Activated naive CD4-positive, alpha-beta T cell treated with anti-CD3 and anti-CD28 coated beads for 36 hours (primary cell): ENCODE measurements at regions of chr10 and their contacts with region 1.

Region 1: DNA sequence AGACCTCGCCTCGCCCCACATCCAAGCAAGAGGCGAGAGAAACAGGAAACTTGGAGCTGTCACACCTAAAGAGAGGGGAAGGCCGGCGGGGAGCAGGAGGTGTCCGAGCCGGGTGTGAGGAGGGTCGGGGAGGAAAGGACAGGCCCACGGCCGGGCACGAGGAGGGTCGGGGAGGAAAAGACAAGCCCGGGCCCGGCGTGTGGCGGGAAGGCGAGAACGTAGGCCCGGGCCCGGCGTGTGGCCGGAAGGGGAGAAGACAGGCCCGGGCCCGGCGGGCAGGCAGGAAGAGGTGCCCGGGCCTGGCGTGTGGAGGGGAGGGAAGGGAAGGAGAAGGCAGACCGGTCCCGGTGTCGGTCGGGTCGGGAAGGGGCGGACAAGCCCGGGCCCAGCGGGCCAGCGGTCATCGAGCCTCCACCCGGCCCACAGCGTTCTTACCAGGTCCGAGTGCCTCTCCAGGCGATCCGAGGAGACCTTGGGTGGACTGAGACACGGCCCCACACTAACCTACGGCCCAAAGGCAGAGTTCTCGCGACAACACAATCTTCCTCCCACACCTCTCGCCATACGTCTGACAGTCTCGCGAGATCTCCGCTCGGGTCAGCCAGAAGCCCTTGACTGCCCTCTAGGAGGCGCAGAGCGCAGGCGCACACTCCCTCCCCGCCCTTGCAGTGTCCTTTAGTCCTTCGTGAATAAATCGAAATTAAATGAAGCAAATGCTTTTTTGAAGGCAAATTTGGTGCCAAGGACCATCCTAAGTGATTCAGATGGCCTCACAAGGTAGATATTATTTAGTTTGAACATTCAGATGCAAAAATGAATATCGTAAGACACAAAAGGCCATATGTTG is at the start of gene NCOA4:
- DNase-seq: peak; percentile 98
- H3K4me3 Mint-ChIP-seq: peak within 1 kb of the TSS; percentile 97
- H3K27ac Mint-ChIP-seq: peak within 1 kb of the TSS; percentile 92
- H3K4me1 Mint-ChIP-seq: peaks cover 49% of the 10 kb centered on the region
- H3K27me3 Mint-ChIP-seq: no peaks in the 10 kb centered on the region
- total RNA-seq, gene NCOA4: 74.2 to 75.0 TPM

Region 2: DNA sequence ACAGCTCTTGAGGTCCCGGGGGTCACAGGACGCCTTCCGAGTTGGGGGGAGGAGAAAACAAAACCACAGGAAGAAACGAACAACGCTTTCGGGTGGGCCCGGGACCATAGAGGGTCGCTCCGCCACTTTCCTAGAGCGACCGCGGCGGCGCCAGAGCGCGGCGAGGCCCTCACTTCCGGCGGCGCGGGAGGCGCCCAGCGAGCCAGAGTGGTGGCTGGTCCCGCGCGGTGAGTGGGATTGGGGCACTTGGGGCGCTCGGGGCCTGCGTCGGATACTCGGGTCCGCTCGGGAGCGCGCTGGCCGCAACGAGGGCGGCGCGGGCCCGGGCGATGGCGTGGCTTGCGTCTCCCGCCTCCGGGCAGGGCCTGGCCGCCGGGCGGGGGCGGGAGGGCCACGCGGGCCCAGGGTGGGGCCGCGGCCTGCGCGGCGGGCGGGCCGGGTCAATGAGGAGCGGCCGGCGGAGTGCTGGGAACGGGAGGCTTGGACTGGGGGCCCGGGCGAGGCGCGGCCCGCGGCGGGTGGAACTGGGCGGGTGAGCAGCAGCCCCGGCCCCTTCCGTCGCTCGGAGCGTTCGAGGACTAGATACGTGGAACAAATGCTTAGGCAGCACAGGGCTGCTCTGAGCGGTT is 1029.4 kb before region 1 on chr10 and contains the start of gene ZNF22:
- CTCF ChIA-PET with region 1: no interaction called
- intact Hi-C with region 1: loop called (anchors 5 kb)
- DNase-seq: peak; percentile 65
- H3K4me3 Mint-ChIP-seq: peak within 1 kb of the TSS; percentile 83
- H3K27ac Mint-ChIP-seq: peak within 1 kb of the TSS; percentile 79
- H3K4me1 Mint-ChIP-seq: peaks cover 26% of the 10 kb centered on the region
- H3K27me3 Mint-ChIP-seq: no peaks in the 10 kb centered on the region
- total RNA-seq, gene ZNF22: 18.7 to 19.5 TPM

Region 3: DNA sequence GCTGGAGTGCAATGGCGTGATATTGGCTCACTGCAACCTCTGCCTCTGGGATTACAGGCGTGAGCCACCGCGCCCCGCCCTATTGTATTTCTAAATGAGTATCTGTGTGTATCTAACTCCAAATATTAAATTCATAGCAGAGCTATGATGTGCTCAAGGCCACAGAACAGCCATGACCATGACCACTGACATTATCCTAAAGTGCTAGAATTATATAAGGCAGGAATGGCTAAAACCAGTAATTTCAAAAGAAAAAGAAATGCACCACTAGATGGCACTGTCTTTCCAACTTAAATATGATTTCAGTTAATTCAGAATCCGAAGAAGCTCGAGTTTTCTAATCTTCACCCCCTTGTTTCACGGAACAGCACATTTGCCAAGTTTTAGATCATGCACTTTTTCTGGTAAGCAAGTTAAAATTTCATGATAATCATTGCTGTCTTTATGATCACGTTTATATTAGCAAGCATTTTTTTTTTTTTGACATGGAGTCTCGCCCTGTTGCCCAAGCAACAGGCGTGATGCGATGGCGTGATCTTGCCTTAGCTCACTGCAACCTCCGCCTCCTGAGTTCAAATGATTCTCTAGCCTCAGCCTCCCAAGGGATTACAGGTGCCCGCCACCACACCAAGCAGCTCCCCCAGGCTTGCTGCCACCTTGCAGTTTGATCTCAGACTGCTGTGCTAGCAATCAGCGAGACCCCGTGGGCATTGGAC is 780.2 kb before region 1 on chr10:
- CTCF ChIA-PET with region 1: no interaction called
- intact Hi-C with region 1: loop called (anchors 5 kb)
- DNase-seq: no peak
- H3K4me3 Mint-ChIP-seq: no peak overlapping the region
- H3K27ac Mint-ChIP-seq: no peak overlapping the region
- H3K4me1 Mint-ChIP-seq: peaks cover 2% of the 10 kb centered on the region
- H3K27me3 Mint-ChIP-seq: no peaks in the 10 kb centered on the region

Region 4: DNA sequence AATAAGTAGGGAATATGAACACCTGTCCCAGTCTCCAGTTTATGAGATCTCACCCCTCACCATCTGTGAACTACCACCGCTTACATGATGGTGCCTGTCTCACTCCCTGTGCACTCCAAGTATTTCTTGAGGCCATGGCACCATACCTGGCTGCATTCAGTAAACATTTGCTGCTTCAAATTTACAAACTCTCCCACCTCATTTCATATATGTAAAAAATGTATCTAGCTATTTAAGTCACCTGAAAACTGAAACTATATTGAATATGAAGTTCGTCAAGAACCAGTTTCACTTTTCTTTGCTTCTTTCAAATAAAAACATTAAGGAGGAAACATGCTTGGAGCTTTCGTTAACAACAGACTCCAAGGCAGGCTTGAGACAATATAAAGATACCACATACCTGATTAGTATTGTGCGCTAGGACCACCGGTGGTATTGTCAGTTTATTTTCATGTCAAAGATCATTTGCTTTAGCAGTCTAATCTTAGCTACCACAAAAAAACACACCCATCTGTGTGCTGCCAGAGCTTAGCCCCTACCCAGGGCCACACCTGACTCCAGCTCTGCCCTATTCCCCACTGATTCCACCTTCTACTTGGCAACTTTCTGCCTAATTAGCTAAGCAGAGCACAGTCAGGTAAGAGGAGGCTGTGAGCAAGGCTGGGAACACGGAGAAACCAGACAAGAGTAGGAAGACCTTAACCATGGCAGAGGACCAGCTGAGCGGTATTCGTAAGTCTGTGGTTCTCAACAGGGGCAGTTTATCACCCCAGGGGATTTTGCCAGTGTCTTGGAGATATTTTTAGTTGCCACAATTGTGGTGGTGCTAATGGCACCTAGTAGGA is 449.7 kb before region 1 on chr10:
- CTCF ChIA-PET with region 1: no interaction called
- intact Hi-C with region 1: loop called (anchors 5 kb)
- DNase-seq: peak; percentile 64
- H3K4me3 Mint-ChIP-seq: peak overlapping the region; percentile 83
- H3K27ac Mint-ChIP-seq: peak overlapping the region; percentile 97
- H3K4me1 Mint-ChIP-seq: peaks cover 42% of the 10 kb centered on the region
- H3K27me3 Mint-ChIP-seq: no peaks in the 10 kb centered on the region

Region 5: DNA sequence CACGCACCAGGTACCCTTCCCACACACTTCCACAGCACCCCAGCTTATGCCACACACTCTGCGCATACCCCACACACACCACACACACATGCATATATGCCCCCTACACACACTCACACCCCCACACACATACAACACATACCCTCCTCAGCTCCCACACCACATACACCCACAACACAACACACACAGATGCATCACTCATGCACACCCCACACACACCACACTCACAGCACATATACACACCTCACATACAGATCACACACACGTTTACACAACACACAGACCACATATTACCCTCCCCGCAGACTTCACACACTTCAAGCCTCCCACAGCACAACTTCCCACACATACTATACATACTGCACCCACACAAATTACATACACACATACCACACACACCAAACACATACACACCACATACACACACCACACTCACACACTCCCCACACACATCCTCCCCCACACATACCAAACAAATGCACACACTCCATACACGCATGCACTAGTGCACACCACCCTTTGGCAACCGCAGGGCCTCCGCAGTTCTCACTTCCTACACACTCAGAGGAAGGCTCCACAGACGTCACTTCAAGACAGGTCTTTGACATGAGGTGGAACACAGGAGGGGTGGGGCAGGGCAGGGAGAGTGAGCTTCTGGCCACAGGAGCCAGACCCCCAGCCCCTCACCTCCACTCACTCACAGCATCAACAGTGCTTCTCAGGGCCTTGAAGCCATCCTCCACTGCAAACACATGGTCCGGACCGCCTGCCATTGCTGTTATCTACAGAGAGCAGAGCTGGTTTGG is 238.0 kb after region 1 on chr10:
- CTCF ChIA-PET with region 1: no interaction called
- intact Hi-C with region 1: loop called (anchors 2 kb)
- DNase-seq: peak; percentile 89
- H3K4me3 Mint-ChIP-seq: no peak overlapping the region
- H3K27ac Mint-ChIP-seq: no peak overlapping the region
- H3K4me1 Mint-ChIP-seq: peaks cover 54% of the 10 kb centered on the region
- H3K27me3 Mint-ChIP-seq: no peaks in the 10 kb centered on the region

Region 6: DNA sequence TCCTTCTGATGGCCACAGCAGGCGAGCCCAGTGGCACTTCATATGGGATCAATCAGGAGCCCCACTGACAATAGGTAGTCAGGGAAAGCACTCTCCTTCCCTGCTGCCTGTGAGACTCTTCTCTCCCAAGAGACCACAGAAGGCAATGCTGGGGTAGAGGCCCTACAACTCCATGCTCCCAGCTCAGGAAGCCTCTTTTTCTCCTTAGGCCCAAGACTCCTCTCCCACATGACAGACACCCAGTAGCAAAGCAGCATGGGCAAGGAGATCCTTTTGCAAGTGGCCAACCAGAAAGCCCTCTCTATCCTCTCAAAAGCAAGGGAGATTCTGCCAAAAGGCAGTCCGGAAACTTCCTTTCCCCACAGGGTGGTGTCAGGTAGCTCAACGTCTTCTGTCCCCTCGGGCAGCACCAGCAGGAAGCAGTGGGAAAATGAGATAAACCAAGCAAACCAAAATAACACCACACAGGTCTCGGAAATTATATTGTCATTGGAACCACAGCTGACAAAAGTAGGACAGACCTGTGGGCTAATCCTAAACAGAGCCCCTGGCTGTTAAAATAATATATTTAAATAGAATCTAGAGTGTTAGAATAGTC is 1097.0 kb after region 1 on chr10:
- CTCF ChIA-PET with region 1: no interaction called
- intact Hi-C with region 1: no loop called
- DNase-seq: no peak
- H3K4me3 Mint-ChIP-seq: no peak overlapping the region
- H3K27ac Mint-ChIP-seq: no peak overlapping the region
- H3K4me1 Mint-ChIP-seq: peaks cover 2% of the 10 kb centered on the region
- H3K27me3 Mint-ChIP-seq: no peaks in the 10 kb centered on the region